Activated CD8-positive, alpha-beta T cell treated with anti-CD3 and anti-CD28 coated beads for 36 hours (primary cell): ENCODE measurements at regions of chr10 and their contacts with region 1.

Region 1: DNA sequence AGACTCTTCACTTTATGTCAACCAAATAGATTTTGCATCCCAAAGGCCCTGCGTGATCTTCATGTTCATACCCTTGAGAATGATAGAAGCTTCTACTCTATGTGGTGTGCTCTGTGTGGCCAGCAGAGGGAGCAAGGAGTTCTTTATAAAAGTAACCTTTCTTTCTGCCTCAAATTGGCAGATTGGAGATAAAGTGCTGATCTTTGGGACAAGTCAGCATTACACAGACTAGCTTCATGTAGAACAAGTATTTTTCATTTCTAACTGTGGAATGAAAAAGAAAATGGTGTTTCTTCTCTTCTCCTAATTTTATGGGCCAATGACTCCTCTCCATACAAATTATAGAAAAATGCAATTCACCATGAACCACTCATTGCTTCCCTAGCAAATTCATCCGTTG is 1214.1 kb downstream of the SORCS1 start:
- DNase-seq: peak; percentile 44
- ATAC-seq: no peak
- H3K4me3 Mint-ChIP-seq: no peak overlapping the region
- H3K27ac Mint-ChIP-seq: no peak overlapping the region
- H3K4me1 Mint-ChIP-seq: no peaks in the 10 kb centered on the region
- H3K27me3 Mint-ChIP-seq: no peaks in the 10 kb centered on the region
- CTCF ChIP-seq: peak; percentile 67

Region 2: DNA sequence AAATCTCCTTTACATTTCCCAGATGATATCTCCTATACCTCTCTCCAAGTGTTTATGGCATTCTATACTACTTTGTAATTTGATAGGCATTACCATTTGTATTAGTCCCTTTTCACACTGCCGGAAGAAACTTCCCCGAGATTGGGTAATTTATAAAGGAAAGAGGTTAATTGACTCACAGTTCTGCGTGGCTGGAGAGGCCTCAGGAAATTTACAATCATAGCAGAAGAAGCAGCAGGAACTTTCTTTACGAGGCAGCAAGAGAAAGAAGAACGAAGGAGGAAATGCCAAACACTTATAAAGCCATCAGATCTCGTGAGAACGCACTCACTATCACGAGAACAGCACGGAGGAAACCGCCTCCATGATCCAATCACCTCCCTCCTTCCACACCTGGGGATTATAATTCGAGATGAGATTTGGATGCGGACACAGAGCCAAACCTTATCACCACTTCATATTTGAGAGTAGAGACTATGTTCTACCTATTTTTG is 19.5 kb after region 1 on chr10:
- CTCF ChIA-PET with region 1: no interaction called
- POLR2A ChIA-PET with region 1: no interaction called
- intact Hi-C with region 1: no loop called
- DNase-seq: no peak
- ATAC-seq: no peak
- H3K4me3 Mint-ChIP-seq: no peak overlapping the region
- H3K27ac Mint-ChIP-seq: no peak overlapping the region
- H3K4me1 Mint-ChIP-seq: no peaks in the 10 kb centered on the region
- H3K27me3 Mint-ChIP-seq: no peaks in the 10 kb centered on the region
- CTCF ChIP-seq: no peak

Region 3: DNA sequence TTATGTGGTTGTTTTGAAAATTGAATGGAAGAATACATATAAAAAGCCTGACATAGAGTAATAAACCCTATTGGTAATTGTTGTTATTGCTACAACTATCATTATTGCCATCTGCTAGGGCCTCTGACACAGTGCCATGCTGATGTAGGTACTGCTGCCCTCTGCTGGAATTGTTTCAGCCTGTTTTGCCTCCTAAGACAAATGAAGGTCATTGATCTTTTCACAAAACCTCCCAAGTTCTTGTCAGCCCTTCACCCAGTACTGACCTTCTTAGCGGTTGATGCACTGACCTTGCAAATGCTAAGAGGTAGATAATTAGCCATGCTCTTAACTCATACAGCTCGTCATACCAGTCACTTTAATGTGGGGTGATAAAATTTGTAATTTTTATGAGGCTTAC is 238.9 kb after region 1 on chr10:
- CTCF ChIA-PET with region 1: no interaction called
- POLR2A ChIA-PET with region 1: no interaction called
- intact Hi-C with region 1: loop called (anchors 10 kb)
- DNase-seq: peak; percentile 40
- ATAC-seq: no peak
- H3K4me3 Mint-ChIP-seq: no peak overlapping the region
- H3K27ac Mint-ChIP-seq: no peak overlapping the region
- H3K4me1 Mint-ChIP-seq: no peaks in the 10 kb centered on the region
- H3K27me3 Mint-ChIP-seq: no peaks in the 10 kb centered on the region
- CTCF ChIP-seq: peak; percentile 20